AG04449 (cell line): ENCODE measurements at regions of chr11 and their contacts with region 1.

Region 1: DNA sequence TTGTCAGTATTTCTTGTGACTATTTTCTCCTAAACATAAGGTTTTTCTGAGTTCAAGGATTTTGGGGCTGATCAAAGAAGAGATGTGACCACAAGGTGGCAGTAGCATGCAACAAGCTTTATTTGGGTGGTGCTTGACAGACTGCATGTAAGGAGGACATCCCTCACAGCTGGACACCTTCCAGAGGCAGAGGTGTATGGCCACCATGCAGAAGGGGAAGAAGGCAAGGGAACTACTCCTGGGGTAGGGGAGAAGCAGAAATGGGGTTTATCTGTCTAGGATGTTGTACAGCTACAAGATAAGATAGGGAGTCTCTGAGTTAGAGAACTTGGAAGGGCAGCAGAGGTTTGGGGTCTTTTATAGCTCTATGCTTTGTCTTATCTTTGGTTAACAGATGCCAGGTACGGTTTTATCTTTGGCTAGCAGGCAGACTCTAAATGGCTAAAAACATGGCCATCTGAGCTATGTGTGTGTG is 5.1 kb upstream of the BIRC2 start:
- DNase-seq: peak; percentile 53
- H3K4me3 ChIP-seq: no peak overlapping the region
- CTCF ChIP-seq: peak; percentile 77

Region 2: GRCh38 chr11:102050927-102051575 is 290.8 kb before region 1 on chr11:
- CTCF ChIA-PET with region 1: no interaction called
- POLR2A ChIA-PET with region 1: no interaction called
- DNase-seq: no peak
- H3K4me3 ChIP-seq: no peak overlapping the region
- CTCF ChIP-seq: no peak

Region 3: DNA sequence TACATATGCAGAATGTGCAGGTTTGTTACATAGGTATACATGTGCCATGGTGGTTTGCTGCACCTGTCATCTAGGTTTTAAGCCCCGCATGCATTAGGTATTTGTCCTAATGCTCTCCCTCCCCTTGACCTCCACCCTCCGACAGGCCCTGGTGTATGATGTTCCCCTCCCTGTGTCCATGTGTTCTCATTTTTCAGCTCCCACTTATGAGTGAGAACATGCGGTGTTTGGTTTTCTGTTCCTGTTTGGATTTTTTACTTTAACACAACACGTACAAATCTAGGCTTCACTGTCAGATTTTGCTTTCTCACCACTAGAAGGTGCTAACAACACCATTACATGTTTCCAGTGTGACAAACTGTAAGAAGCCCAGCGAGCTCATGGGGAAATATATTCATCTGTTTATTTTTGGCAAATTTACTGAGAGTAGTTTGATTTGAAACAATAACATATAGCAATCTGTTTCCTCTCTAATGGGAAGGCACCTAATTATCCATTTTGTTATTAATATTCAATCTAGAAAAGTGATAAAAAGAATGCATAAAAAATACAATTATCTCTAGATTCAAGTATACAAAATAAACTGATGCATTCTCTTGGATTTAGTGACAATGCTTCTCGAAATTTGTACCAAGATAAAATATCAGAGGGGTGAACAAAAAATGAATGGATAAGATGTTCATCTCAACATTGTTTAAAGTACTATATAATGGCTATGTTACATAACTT is 47.8 kb before region 1 on chr11:
- CTCF ChIA-PET with region 1: interaction called, 57 read pairs
- POLR2A ChIA-PET with region 1: no interaction called
- DNase-seq: no peak
- H3K4me3 ChIP-seq: no peak overlapping the region
- CTCF ChIP-seq: peak; percentile 55

Region 4: GRCh38 chr11:102317099-102317767 is 24.6 kb before region 1 on chr11 and contains the start of gene BIRC3:
- CTCF ChIA-PET with region 1: interaction called, 24 read pairs
- POLR2A ChIA-PET with region 1: no interaction called
- DNase-seq: peak; percentile 84
- H3K4me3 ChIP-seq: peak within 1 kb of the TSS; percentile 65
- CTCF ChIP-seq: peak; percentile 43

Region 5: DNA sequence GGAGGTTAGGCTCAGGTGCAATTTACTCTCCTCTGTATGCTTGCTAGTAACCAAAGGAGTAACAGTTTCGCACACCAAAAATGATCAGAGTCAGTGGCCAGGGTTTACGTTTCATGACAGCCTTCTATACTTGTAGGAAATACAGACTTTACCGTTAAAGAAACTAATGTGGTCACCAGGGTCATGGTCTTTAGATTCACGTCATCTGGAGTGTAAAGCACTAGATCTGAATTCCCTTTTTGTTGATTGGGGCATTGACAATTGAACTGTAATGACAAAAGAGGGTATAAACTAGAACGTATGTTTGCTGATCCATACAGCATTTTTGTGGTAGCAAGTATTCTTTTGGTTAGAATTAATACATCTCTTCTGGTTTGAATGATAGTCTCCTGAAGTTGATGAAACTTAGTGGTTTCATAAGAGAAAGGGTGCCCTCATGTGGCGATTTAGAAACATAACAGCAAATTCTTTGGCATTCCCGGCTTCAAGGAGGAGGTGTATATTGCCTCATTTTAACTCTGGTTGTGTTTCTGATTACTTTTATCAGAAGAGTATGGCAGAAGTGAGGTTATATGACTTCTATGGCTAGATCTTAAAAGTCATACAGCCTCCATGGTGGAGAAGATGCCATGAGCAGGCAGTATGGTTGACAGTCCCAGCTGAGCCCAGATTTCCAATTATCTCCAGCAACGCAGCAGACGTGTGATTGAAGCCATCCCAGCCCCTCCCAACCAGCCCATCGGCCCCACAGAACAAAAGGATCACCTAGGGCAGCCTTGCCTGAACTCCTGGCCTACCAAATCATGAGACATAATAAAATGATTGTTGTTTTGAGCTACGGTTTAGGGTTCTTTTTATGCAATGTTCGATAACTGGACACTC is 153.5 kb after region 1 on chr11:
- CTCF ChIA-PET with region 1: interaction called, 61 read pairs
- POLR2A ChIA-PET with region 1: no interaction called
- DNase-seq: peak; percentile 67
- H3K4me3 ChIP-seq: no peak overlapping the region
- CTCF ChIP-seq: peak; percentile 46